Left ventricle myocardium inferior (tissue), 1 donor: ENCODE measurements at regions of chr15 and their contacts with region 1.

Region 1: GRCh38 chr15:82139823-82140268 is 94.0 kb upstream of the MEX3B start:
- DNase-seq: no peak
- H3K4me3 ChIP-seq: no peak overlapping the region
- H3K27ac ChIP-seq: no peak overlapping the region
- H3K4me1 ChIP-seq: peaks cover 20% of the 10 kb centered on the region
- H3K27me3 ChIP-seq: no peaks in the 10 kb centered on the region
- CTCF ChIP-seq: peak; percentile 74

Region 2: GRCh38 chr15:81071120-81071519 is 1068.7 kb before region 1 on chr15:
- intact Hi-C with region 1: no loop called
- DNase-seq: no peak
- H3K4me3 ChIP-seq: no peak overlapping the region
- H3K27ac ChIP-seq: peak overlapping the region; percentile 66
- H3K4me1 ChIP-seq: peaks cover 30% of the 10 kb centered on the region
- H3K27me3 ChIP-seq: no peaks in the 10 kb centered on the region
- CTCF ChIP-seq: no peak

Region 3: DNA sequence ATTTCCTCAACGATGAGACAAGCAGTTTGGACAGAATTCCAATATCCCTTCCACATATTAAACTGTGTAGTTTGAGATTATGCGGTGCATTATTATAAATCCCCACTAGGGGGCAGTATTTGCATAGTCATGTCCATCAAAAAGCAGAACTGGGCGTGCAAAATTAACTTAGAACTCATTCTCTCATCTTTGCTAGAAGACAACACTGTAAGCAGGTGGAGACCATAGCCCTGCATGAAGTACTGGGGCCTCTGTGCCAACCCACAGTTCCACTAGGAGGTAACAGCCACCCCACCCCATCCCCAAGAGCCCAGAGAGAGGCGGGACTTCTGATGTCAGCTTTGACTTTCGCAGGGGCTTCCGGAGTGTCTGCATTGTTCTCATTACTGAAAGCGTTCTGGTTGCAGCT is 659.2 kb before region 1 on chr15:
- intact Hi-C with region 1: loop called (anchors 5 kb)
- DNase-seq: no peak
- H3K4me3 ChIP-seq: no peak overlapping the region
- H3K27ac ChIP-seq: no peak overlapping the region
- H3K4me1 ChIP-seq: peaks cover 6% of the 10 kb centered on the region
- H3K27me3 ChIP-seq: no peaks in the 10 kb centered on the region
- CTCF ChIP-seq: peak; percentile 87

Region 4: GRCh38 chr15:81819924-81820635 is 319.8 kb before region 1 on chr15:
- intact Hi-C with region 1: no loop called
- DNase-seq: no peak
- H3K4me3 ChIP-seq: no peak overlapping the region
- H3K27ac ChIP-seq: no peak overlapping the region
- H3K4me1 ChIP-seq: no peaks in the 10 kb centered on the region
- H3K27me3 ChIP-seq: peaks cover 17% of the 10 kb centered on the region
- CTCF ChIP-seq: no peak

Region 5: GRCh38 chr15:82091636-82092140 is 48.2 kb before region 1 on chr15:
- intact Hi-C with region 1: no loop called
- DNase-seq: no peak
- H3K4me3 ChIP-seq: no peak overlapping the region
- H3K27ac ChIP-seq: no peak overlapping the region
- H3K4me1 ChIP-seq: no peaks in the 10 kb centered on the region
- H3K27me3 ChIP-seq: no peaks in the 10 kb centered on the region
- CTCF ChIP-seq: no peak